Sigmoid colon (tissue), 7 donors: ENCODE measurements at regions of chr6 and their contacts with region 1.

Region 1: DNA sequence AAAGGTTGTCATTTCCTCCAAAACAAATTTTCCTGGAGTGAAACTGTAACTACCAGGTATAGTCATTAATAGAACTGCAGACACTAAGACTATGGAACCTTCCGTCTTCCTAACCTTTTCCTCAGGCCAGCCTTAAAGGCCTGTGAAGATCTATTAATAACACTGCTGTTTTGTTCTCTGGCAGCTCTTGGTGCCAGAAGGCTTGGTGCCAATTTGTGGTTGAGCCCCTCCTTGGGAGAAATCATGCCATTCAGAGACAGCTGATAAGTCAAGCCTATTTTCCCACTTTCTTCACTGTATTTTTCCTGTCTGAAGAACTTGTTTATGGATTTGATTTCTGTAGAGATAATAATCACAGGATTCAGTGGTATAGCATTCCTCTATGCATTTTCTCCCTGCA is 64.8 kb downstream of the HCRTR2 start:
- DNase-seq: no peak
- H3K4me3 ChIP-seq: no peak overlapping the region
- H3K27ac ChIP-seq: no peak overlapping the region
- H3K4me1 ChIP-seq: no peaks in the 10 kb centered on the region
- H3K27me3 ChIP-seq: no peaks in the 10 kb centered on the region
- CTCF ChIP-seq: no peak
- EP300 ChIP-seq: no peak
- POLR2A ChIP-seq: no peak

Region 2: DNA sequence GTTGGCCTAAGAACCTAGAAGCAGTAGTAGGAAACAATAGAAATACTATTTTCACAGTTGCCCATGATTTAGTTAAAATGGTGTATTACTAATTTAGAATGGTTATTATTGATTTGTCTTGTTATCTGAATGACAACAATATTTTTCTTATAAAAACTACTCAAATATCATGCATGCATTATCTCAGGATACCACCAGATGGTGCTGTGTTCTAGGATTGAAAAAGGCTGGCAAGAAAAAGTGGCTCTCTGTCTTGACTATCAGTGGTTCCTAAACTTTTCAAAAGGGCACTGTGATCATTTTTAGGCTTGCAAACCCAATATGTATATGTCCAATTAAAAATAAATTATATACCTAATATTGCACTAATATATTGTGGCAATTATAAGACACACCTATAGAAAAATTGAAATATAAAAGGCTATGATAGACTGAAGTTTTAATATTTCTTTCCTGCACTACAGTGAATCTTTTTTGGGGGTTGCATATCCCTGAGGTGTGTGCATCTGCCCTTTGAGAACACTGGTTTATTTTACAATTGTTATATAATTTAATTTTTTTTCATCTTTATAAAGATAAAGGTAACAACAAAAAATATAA is 1259.5 kb before region 1 on chr6:
- intact Hi-C with region 1: loop called (anchors 5 kb)
- DNase-seq: no peak
- H3K4me3 ChIP-seq: no peak overlapping the region
- H3K27ac ChIP-seq: no peak overlapping the region
- H3K4me1 ChIP-seq: no peaks in the 10 kb centered on the region
- H3K27me3 ChIP-seq: no peaks in the 10 kb centered on the region
- CTCF ChIP-seq: peak; percentile 14 to 82 (median 56)
- EP300 ChIP-seq: no peak
- POLR2A ChIP-seq: no peak

Region 3: DNA sequence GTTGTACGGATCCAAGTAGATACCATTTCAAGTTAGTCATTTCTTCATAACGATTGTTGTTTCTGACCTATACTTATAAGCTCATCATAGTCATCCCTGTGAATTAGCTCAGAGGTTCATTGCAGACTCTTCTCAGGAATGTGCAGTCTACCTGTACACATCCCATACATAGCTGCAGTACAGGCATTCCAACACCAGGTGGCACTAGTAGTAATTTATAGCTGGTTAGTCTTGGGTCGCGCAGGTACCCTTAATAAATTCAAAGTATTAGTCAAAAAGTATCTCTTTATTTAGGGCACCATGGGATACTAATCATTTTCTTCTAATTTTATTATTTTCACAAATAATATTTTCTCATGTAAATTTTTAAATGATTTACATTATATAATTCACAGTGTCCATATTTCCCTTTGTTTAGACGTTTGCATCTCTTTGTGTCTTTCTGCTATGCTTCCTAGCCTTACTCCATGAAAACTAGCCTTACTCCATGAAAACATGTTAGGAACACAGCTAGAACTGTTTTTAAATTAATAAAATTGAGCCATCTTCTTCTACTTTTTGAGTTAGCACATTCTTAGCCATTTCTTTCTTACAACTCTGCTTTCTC is 521.1 kb before region 1 on chr6:
- intact Hi-C with region 1: loop called (anchors 10 kb)
- DNase-seq: no peak
- H3K4me3 ChIP-seq: no peak overlapping the region
- H3K27ac ChIP-seq: no peak overlapping the region
- H3K4me1 ChIP-seq: no peaks in the 10 kb centered on the region
- H3K27me3 ChIP-seq: no peaks in the 10 kb centered on the region
- CTCF ChIP-seq: peak; percentile 17 to 62 (median 55)
- EP300 ChIP-seq: no peak
- POLR2A ChIP-seq: no peak

Region 4: DNA sequence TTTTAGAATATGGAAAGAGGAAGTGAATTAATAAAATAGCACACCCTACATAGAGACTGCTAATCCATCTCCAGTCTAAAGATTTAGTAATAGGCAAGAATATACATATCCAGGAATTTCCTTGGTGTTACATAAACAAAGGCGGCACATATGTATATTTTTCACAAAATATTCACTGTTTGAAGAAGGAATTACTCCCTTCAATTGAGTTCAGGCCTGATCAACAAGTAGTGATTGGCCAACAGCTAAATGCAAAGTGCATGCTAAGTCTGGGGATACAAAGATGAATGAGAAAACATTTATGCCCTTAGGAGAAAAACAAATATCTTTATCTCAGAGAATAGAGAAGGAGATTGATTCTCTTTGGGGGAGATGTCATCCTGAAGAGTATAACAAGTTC is 71.2 kb before region 1 on chr6:
- intact Hi-C with region 1: no loop called
- DNase-seq: no peak
- H3K4me3 ChIP-seq: no peak overlapping the region
- H3K27ac ChIP-seq: no peak overlapping the region
- H3K4me1 ChIP-seq: no peaks in the 10 kb centered on the region
- H3K27me3 ChIP-seq: peaks cover 0 to 3% (median 0%) of the 10 kb centered on the region in 3 donors
- CTCF ChIP-seq: no peak
- EP300 ChIP-seq: no peak
- POLR2A ChIP-seq: no peak